ENCODE measurements at regions of chr15 and their contacts with region 1.

Region 1: DNA sequence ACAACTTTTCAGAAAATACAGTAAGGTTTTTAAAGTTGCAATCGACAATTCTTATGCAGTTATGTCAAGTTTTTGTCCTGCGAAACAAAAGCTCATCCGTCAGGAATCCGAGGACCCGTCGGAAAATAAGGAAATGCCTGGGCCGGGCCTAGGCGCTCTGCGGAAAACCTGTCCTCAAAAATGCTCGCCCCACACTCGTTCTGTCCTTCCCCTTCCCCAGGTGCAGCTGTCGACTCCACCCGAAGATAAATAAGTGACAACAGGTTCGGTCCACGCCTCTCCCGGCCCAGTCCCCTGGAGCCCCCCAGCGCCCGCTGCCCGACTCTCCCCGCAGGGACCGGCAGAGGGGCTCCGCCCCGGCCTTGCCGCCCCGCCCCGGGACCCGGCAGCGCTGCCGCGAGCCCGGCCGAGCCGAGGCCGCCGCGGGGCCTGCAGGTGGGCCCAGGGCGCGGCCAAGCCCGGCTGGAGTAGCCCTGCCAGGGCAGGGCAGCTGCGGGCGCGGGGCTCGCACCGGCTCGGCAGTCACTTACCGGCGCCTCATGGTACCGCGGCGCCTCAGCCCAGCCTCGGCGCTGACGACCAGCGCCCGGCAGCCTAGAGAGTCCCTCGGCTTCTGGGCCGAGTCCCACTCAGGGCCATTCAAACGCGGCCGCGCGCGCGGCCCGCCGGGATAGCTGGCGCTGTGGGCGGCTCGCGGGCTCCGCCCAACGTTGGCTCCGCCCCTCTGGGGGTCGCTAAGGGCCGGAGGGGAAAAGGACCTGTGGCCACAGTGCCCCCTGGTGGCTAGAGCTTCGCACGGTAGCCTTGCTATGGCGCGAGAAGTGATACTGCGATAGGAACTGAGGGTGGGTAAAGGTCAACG is at the start of gene KATNBL1:
- DNase-seq: peak; percentile 98
- H3K4me3 ChIP-seq: peak within 1 kb of the TSS; percentile 67 to 78 (median 68)
- H3K27ac ChIP-seq: peak within 1 kb of the TSS; percentile 83 to 90 (median 86)
- H3K4me1 ChIP-seq: peaks cover 15 to 22% (median 20%) of the 10 kb centered on the region in 4 donors
- H3K27me3 ChIP-seq: no peaks in the 10 kb centered on the region
- CTCF ChIP-seq: peak; percentile 92 to 98 (median 96)
- EP300 ChIP-seq: no peak
- POLR2A ChIP-seq: no peak
- total RNA-seq, gene KATNBL1: 29.9 to 61.9 (median 32.8) TPM

Region 2: DNA sequence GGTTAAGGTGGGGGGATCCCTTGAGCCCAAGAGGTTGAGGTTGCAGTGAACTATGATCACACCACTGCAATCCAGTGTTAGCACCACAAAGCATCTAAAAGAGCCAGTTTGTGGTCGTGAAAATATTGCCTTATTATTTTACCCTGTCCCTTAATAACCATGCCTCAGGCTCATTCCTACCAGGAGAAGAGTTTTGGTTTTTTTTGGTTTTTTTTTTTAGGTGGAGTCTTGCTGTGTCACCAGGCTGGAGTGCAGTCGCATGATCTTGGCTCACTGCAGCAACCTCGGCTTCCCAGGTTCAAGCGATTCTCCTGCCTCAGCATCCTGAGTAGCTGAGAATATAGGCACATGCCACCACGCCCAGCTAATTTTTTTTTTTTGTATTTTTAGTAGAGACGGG is 152.7 kb before region 1 on chr15:
- intact Hi-C with region 1: loop called (anchors 1 kb)
- DNase-seq: no peak
- H3K4me3 ChIP-seq: no peak overlapping the region
- H3K27ac ChIP-seq: no peak overlapping the region
- H3K4me1 ChIP-seq: peaks cover 0 to 4% (median 0%) of the 10 kb centered on the region in 4 donors
- H3K27me3 ChIP-seq: no peaks in the 10 kb centered on the region
- CTCF ChIP-seq: no peak
- EP300 ChIP-seq: no peak
- POLR2A ChIP-seq: no peak